ENCODE measurements at regions of chr4 and their contacts with region 1.

Region 1: GRCh38 chr4:173301518-173302201 is 32.5 kb downstream of the HMGB2 start:
- DNase-seq: no peak
- ATAC-seq: peak; percentile 28

Region 2: DNA sequence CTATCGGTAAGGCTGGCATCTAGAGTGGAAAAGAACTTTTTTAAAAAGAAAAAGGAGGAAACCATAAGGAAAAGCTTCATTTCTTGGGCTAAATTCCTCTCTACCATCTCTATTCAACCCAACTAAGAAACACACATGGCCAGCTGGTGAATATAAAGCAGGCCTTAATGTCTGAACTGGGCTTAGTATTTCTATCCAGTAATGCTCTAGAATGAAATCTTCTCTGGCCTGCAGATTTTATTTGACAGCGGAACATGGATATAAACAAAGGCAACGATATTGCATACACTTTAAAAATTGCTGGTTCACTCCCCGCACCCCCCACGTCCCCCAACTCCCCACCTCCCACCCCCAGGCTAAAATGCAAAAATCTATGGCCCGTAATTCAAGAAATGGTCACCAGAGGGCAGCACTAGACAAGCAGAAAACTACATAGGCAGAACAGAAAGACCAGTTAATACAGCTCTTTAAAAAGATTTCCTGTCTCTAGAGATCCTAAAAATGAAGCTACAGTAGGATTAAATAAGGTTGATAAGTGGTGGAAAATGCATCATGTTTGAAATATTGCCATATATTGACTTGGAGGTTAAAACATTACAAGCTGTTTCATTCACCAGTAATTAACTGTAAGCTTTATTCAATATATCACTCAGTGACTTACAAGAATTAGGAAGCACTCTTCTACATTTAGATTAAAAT is 288.3 kb before region 1 on chr4:
- intact Hi-C with region 1: loop called (anchors 5 kb)
- DNase-seq: no peak
- ATAC-seq: peak; percentile 56

Region 3: DNA sequence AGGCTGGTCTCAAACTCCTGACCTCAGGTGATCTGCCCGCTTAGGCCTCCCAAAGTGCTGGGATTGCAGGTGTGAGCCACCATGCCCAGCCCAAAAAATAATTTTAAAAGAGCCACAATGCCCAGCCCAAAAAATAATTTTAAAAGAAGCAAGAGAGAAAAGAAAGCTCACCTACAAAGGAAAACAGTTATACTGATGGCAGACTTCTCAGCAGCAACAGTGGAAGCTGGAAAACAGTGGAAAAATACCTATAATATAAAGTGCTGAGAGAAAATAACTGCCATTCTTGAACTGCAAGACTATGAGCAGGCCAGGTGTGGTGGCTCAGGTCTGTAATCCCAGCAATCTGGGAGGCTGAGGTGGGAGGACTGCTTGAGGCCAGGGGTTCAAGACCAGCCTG is 45.8 kb after region 1 on chr4:
- intact Hi-C with region 1: no loop called
- DNase-seq: no peak
- ATAC-seq: no peak

Measured in Right ventricle myocardium inferior (tissue), 1 donor.